BJ (cell line): ENCODE measurements at regions of chr1 and their contacts with region 1.

Region 1: DNA sequence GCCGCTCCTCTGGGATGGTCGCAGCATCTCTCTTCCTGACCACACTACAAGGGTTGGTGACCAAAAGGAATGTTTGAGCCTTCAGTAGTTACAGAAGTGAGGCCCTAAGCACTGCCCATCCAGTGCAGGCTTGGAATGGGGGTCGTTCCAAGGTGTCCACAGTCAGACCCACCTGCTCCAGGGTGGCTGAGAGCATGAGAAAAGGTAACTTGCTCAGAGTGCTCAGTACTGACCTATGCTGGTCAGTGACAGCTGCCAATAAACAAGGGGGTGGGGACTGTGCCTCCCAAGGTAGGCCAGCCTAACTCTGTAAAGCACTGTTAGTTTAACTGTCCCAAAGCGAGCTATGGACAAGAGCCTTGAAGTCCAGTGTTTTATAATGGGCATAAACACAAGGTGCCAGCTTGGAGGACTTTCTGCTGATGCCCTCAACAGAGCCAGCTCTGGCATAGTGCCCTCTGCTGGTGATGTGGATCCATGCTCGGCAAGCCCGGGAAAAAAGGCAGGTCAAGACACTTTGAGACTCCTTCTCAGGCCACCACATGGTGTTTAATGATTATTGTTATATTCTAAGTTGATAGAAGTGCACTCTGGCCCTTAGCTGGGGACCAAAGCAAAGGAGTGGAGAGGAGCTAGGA is 78.1 kb upstream of the DNAH14 start:
- DNase-seq: no peak
- H3K4me3 ChIP-seq: no peak overlapping the region
- H3K27me3 ChIP-seq: peaks cover 4% of the 10 kb centered on the region; the same call in 1 of the 2 replicates
- CTCF ChIP-seq: peak; percentile 82

Region 2: GRCh38 chr1:224513787-224514209 is 337.5 kb before region 1 on chr1:
- CTCF ChIA-PET with region 1: interaction called, 255 read pairs
- POLR2A ChIA-PET with region 1: no interaction called
- DNase-seq: no peak
- H3K4me3 ChIP-seq: no peak overlapping the region
- H3K27me3 ChIP-seq: no peaks in the 10 kb centered on the region
- CTCF ChIP-seq: peak; percentile 90

Region 3: DNA sequence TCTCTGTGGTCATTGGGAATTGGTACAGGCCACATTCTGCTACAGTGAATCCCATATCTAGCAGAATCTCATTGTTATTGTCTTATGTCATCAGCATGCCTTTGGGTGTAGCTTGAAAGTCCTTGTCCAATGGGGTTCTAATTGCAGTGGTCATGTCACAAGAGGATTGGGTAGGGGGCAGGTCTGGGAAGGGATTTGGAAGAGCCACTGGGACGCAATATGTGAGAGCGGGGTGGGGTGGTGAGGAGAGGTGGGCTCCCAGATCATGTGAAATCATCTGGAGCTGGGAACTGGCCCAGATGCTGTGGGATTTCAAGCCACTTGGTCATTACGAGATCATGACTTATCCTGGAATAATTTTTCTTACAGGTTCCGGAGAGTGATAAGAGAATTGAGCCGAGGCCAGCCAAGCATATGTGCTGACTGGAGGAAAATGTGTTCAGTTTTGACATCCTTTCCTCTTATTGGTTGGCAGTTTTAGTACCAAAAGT is 218.9 kb before region 1 on chr1:
- CTCF ChIA-PET with region 1: interaction called, 10 read pairs
- POLR2A ChIA-PET with region 1: no interaction called
- DNase-seq: no peak
- H3K4me3 ChIP-seq: no peak overlapping the region
- H3K27me3 ChIP-seq: no peaks in the 10 kb centered on the region
- CTCF ChIP-seq: no peak

Region 4: DNA sequence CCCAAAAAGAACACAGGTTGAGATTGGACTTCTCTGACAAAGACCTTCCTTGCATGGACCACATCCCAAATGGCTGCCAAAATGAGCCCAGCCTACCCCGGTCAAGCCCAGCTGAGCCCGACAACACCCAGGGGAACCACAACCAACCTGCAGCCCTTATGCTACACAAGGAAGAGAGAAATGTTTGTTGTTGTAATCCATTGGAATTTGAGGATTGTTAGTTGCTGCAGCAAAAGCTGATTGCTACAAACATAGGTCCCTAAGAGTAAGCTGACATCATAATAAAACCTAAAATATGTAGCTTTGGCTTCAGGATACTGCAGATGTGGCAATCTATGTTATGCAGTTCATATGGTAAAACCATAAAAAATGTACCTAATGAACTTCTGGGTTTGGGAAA is 12.6 kb after region 1 on chr1:
- CTCF ChIA-PET with region 1: interaction called, 35 read pairs
- POLR2A ChIA-PET with region 1: no interaction called
- DNase-seq: no peak
- H3K4me3 ChIP-seq: no peak overlapping the region
- H3K27me3 ChIP-seq: no peaks in the 10 kb centered on the region
- CTCF ChIP-seq: no peak

Region 5: DNA sequence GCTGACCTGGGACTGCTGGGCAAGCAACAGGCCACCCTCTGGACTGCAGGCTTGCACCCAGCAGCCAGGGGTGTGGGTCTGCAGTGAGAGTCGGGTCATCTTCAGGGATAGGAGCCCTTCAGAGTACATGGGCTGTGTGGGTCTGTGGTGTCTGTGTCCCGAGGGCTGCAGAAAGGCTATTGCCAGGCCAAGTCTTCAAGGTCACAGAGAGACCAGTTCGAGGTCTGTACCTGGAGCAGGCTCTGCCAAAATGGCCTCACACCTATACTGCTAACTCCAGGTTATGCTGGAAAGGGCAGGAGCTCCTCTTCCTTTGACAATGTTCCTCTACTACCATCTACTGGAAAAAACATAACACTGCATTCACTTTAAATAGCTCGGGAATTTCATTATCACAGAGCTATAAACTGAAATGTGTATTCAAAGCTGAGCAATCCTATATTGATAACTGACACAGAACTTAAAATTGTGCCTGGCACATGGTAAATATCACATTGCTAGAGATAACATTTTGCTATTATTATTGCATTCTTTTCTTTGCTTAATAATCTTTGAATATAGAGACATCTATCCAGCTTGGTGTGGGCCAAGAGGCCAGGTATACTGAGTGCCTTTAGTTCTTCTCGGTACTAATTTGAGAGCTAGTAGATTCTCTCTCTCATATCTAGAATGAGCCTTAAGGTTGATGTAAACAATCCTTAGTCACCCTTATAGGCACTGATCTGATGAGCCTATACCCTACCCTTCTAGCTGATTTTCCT is 71.3 kb after region 1 on chr1:
- CTCF ChIA-PET with region 1: interaction called, 15 read pairs
- POLR2A ChIA-PET with region 1: no interaction called
- DNase-seq: no peak
- H3K4me3 ChIP-seq: no peak overlapping the region
- H3K27me3 ChIP-seq: no peaks in the 10 kb centered on the region
- CTCF ChIP-seq: peak; percentile 72

Region 6: GRCh38 chr1:224988042-224988441 is 136.7 kb after region 1 on chr1:
- CTCF ChIA-PET with region 1: no interaction called
- POLR2A ChIA-PET with region 1: no interaction called
- DNase-seq: no peak
- H3K4me3 ChIP-seq: no peak overlapping the region
- H3K27me3 ChIP-seq: no peaks in the 10 kb centered on the region
- CTCF ChIP-seq: no peak